ENCODE measurements at regions of chr11 and their contacts with region 1.

Region 1: GRCh38 chr11:119030329-119031049 is at the start of gene SLC37A4:
- DNase-seq: peak; percentile 98
- H3K4me3 Mint-ChIP-seq: peak within 1 kb of the TSS; percentile 70
- H3K27ac Mint-ChIP-seq: peak within 1 kb of the TSS; percentile 81
- H3K4me1 Mint-ChIP-seq: peaks cover 28% of the 10 kb centered on the region
- H3K27me3 Mint-ChIP-seq: no peaks in the 10 kb centered on the region
- total RNA-seq, gene SLC37A4: 17.9 to 19.4 TPM

Region 2: GRCh38 chr11:119041821-119042514 is 11.5 kb after region 1 on chr11:
- CTCF ChIA-PET with region 1: interaction called, 14 read pairs
- POLR2A ChIA-PET with region 1: no interaction called
- DNase-seq: no peak
- H3K4me3 Mint-ChIP-seq: no peak overlapping the region
- H3K27ac Mint-ChIP-seq: peak overlapping the region; percentile 27
- H3K4me1 Mint-ChIP-seq: peaks cover 4% of the 10 kb centered on the region
- H3K27me3 Mint-ChIP-seq: no peaks in the 10 kb centered on the region

Region 3: DNA sequence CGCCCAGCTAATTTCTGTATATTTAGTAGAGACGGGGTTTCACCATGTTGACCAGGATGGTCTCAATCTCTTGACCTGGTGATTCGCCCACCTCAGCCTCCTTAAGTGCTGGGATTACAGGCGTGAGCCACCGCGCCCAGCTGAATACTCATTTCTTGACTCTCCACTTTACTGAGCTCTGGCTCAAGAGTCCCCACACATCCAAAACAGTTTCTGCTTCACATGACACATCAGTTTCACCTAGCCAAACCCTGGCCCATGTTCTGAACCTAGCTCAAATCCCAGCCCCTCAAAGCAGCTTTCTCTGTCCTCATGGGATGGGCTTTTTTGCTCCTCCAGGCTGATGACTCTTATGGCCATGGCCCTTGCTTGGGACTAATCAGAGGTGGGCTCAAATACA is 16.7 kb after region 1 on chr11:
- CTCF ChIA-PET with region 1: interaction called, 14 read pairs
- POLR2A ChIA-PET with region 1: no interaction called
- DNase-seq: no peak
- H3K4me3 Mint-ChIP-seq: no peak overlapping the region
- H3K27ac Mint-ChIP-seq: no peak overlapping the region
- H3K4me1 Mint-ChIP-seq: peaks cover 9% of the 10 kb centered on the region
- H3K27me3 Mint-ChIP-seq: no peaks in the 10 kb centered on the region

Region 4: GRCh38 chr11:119057000-119057769 is 26.7 kb after region 1 on chr11 and contains the start of gene HYOU1:
- CTCF ChIA-PET with region 1: interaction called, 15 read pairs
- POLR2A ChIA-PET with region 1: no interaction called
- DNase-seq: peak; percentile 99
- H3K4me3 Mint-ChIP-seq: peak within 1 kb of the TSS; percentile 97
- H3K27ac Mint-ChIP-seq: peak within 1 kb of the TSS; percentile 98
- H3K4me1 Mint-ChIP-seq: peaks cover 37% of the 10 kb centered on the region
- H3K27me3 Mint-ChIP-seq: no peaks in the 10 kb centered on the region
- total RNA-seq, gene HYOU1: 117 to 119 TPM